ENCODE measurements at regions of chr19 and their contacts with region 1.

Region 1: GRCh38 chr19:4369888-4370260 is 26.5 kb downstream of the MPND start:
- DNase-seq: peak; percentile 75
- H3K4me3 ChIP-seq: peak overlapping the region in 2 of 3 experiments; percentile 10 to 26
- H3K27ac ChIP-seq: peak overlapping the region; percentile 75
- H3K4me1 ChIP-seq: peaks cover 53% of the 10 kb centered on the region
- H3K27me3 ChIP-seq: no peaks in the 10 kb centered on the region
- CTCF ChIP-seq: peak; percentile 22 to 83

Region 2: GRCh38 chr19:4065430-4066175 is 304.3 kb before region 1 on chr19:
- CTCF ChIA-PET with region 1: no interaction called
- dilution Hi-C with region 1: loop called (anchors 10 kb)
- in situ Hi-C with region 1: no loop called
- intact Hi-C with region 1: no loop called
- DNase-seq: peak; percentile 92
- H3K4me3 ChIP-seq: peak overlapping the region; percentile 88 to 92 (median 92)
- H3K27ac ChIP-seq: no peak overlapping the region
- H3K4me1 ChIP-seq: peaks cover 31% of the 10 kb centered on the region
- H3K27me3 ChIP-seq: no peaks in the 10 kb centered on the region
- CTCF ChIP-seq: no peak

Region 3: GRCh38 chr19:4294389-4294788 is 75.5 kb before region 1 on chr19:
- CTCF ChIA-PET with region 1: no interaction called
- dilution Hi-C with region 1: loop called (anchors 5 kb)
- in situ Hi-C with region 1: no loop called
- intact Hi-C with region 1: no loop called
- DNase-seq: no peak
- H3K4me3 ChIP-seq: no peak overlapping the region
- H3K27ac ChIP-seq: no peak overlapping the region
- H3K4me1 ChIP-seq: no peaks in the 10 kb centered on the region
- H3K27me3 ChIP-seq: no peaks in the 10 kb centered on the region
- CTCF ChIP-seq: no peak

Region 4: GRCh38 chr19:4352701-4353121 is 17.2 kb before region 1 on chr19:
- CTCF ChIA-PET with region 1: interaction called, 6 read pairs
- dilution Hi-C with region 1: no loop called
- in situ Hi-C with region 1: no loop called
- intact Hi-C with region 1: loop called (anchors 2 kb)
- DNase-seq: no peak
- H3K4me3 ChIP-seq: no peak overlapping the region
- H3K27ac ChIP-seq: no peak overlapping the region
- H3K4me1 ChIP-seq: no peaks in the 10 kb centered on the region
- H3K27me3 ChIP-seq: no peaks in the 10 kb centered on the region
- CTCF ChIP-seq: peak; percentile 62 to 78

Region 5: GRCh38 chr19:4390567-4391305 is 20.9 kb after region 1 on chr19:
- CTCF ChIA-PET with region 1: no interaction called
- dilution Hi-C with region 1: no loop called
- in situ Hi-C with region 1: no loop called
- intact Hi-C with region 1: no loop called
- DNase-seq: peak; percentile 73
- H3K4me3 ChIP-seq: no peak overlapping the region
- H3K27ac ChIP-seq: peak overlapping the region; percentile 66
- H3K4me1 ChIP-seq: peaks cover 43% of the 10 kb centered on the region
- H3K27me3 ChIP-seq: no peaks in the 10 kb centered on the region
- CTCF ChIP-seq: no peak

Region 6: GRCh38 chr19:4457654-4458395 is 88.0 kb after region 1 on chr19 and contains the start of gene UBXN6:
- CTCF ChIA-PET with region 1: no interaction called
- dilution Hi-C with region 1: loop called (anchors 5 kb)
- in situ Hi-C with region 1: no loop called
- intact Hi-C with region 1: no loop called
- DNase-seq: peak; percentile 96
- H3K4me3 ChIP-seq: peak within 1 kb of the TSS; percentile 72 to 88 (median 80)
- H3K27ac ChIP-seq: peak within 1 kb of the TSS; percentile 48
- H3K4me1 ChIP-seq: peaks cover 22% of the 10 kb centered on the region
- H3K27me3 ChIP-seq: no peaks in the 10 kb centered on the region
- CTCF ChIP-seq: no peak
- total RNA-seq, gene UBXN6: 81.0 to 87.7 TPM

Measured in mammary epithelial cell (primary cell).